Sigmoid colon (tissue), 7 donors: ENCODE measurements at regions of chr20 and their contacts with region 1.

Region 1: GRCh38 chr20:6767536-6768227 is at the start of gene BMP2:
- DNase-seq: peak; percentile 62
- H3K4me3 ChIP-seq: peak within 1 kb of the TSS; percentile 36 to 70 (median 64)
- H3K27ac ChIP-seq: peak within 1 kb of the TSS; percentile 29 to 68 (median 61)
- H3K4me1 ChIP-seq: peaks cover 0 to 24% (median 21%) of the 10 kb centered on the region in 4 donors
- H3K27me3 ChIP-seq: peaks cover 0 to 35% (median 13%) of the 10 kb centered on the region in 3 donors
- CTCF ChIP-seq: no peak
- EP300 ChIP-seq: no peak
- POLR2A ChIP-seq: no peak
- total RNA-seq, gene BMP2: 2.6 to 3.2 (median 2.8) TPM

Region 2: DNA sequence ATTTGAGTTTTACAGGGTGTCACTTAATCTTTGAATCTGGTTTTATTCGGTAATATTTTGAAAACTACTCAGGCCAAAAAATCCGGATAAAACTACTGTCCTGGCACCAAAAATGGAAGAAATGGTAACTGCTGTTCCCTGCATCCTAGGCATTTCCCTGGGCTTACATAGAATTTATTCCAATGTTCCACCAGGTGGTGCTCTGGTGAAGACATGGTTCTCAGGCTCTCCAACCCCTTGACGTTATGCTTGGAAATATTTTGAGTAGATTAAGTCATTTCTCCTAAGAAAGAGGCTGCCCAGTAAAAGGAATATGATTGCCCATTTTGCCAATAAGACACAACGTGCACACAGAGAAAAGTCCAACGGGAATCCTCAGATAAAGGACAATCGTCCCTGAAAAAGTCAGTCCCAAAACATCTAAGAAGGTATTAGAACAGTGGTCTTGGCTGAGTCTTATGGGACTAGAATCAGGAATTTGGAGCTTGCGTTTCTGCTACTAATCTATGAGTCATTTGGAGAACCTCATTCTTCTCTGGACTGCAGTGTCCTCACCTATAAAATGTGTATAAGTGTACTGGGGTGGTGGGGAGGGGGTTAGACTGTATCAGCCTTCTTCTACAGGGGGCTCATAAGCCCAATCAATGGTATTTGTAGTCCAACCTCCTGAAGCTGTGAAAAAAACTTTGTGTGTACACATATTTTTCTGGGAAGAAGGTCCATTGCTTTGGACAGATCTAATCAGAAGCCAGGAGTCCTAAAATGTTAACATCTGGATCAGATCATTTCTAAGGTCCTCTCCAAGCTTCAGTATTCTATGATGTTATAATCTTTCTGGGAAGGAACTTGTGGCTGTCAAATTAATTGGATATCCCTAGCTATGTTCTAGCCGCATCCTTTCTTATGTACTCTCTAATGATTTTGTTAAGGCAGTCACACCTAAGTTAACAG is 131.2 kb before region 1 on chr20:
- intact Hi-C with region 1: loop called (anchors 10 kb)
- DNase-seq: no peak
- H3K4me3 ChIP-seq: no peak overlapping the region
- H3K27ac ChIP-seq: peak overlapping the region in 1 of 4 donors; percentile 45
- H3K4me1 ChIP-seq: no peaks in the 10 kb centered on the region
- H3K27me3 ChIP-seq: no peaks in the 10 kb centered on the region
- CTCF ChIP-seq: peak in 3 of 4 experiments; percentile 19 to 22 (median 22)
- EP300 ChIP-seq: no peak
- POLR2A ChIP-seq: no peak

Region 3: DNA sequence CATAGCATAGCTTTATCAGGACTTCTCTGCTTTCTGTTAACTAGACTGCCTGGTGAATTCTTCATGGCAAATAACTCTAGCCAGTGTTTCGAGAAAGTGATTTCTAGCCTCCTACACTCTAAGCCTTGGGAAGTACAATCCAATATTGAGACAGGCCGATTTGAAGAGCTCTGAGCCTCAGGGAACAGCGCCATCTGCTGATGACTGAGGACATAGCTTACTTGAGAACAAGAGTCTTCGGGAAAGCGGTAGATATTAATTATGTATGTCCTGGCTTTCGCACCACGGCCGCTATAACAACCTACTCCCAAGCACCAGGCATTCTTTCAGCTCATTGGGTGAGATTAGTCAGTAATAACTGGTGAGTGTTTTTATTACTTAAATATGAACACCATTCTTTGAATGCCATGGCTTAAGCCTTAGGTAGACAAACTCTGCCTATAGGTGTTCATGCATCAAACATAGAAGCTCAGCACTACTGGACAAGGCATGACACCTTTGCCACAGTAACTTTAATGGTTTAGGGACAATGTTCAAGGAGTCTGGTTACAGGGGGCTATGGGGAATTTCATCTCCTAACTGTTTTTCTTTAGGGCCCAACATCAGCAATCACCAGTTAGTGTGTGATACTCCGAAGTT is 518.4 kb after region 1 on chr20:
- intact Hi-C with region 1: loop called (anchors 5 kb)
- DNase-seq: peak; percentile 82
- H3K4me3 ChIP-seq: no peak overlapping the region
- H3K27ac ChIP-seq: no peak overlapping the region
- H3K4me1 ChIP-seq: no peaks in the 10 kb centered on the region
- H3K27me3 ChIP-seq: no peaks in the 10 kb centered on the region
- CTCF ChIP-seq: peak; percentile 10 to 72 (median 58)
- EP300 ChIP-seq: no peak
- POLR2A ChIP-seq: no peak

Region 4: DNA sequence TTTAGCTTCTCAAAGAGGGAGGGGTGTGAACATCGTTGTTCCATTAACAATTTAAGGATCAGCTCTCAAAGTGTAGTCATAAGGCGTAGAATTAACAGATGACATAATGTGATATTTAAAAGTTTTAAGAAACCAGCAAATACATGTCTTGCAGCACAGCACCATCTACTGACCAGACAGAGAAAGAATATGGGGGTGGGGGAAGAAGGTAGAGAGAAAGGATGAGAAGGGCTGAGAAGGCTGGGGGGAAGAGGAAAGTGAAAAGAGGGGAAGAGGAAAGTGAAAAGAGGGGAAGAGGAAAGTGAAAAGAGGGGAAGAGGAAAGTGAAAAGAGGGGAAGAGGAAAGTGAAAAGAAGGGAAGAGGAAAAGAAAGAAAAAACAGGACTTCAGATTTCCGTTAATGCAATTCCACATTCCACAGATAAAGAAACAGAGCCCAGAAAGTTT is 1091.7 kb after region 1 on chr20:
- intact Hi-C with region 1: loop called (anchors 5 kb)
- DNase-seq: no peak
- H3K4me3 ChIP-seq: no peak overlapping the region
- H3K27ac ChIP-seq: no peak overlapping the region
- H3K4me1 ChIP-seq: peaks cover 0 to 4% (median 0%) of the 10 kb centered on the region in 4 donors
- H3K27me3 ChIP-seq: no peaks in the 10 kb centered on the region
- CTCF ChIP-seq: peak; percentile 53 to 61 (median 56)
- EP300 ChIP-seq: no peak
- POLR2A ChIP-seq: no peak

Region 5: DNA sequence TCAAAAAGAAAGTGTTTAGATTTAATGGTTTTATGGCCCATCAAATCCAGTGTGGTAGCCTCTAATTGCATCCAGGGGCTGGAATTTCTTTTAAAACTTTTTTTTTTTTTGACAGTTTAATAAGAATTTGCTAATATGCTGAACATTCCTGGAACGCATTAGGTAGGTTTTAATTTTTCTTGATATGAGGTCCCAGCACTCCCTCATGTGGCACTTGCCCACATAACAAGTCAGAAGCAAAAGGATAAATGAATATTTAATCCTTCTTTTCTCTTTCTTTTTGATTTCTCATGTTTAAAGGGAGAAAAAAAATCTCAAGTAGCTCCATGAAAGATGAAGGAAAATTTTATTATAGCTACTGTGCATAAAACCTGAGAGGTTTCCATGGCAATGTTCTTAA is 1159.1 kb after region 1 on chr20:
- intact Hi-C with region 1: loop called (anchors 10 kb)
- DNase-seq: no peak
- H3K4me3 ChIP-seq: no peak overlapping the region
- H3K27ac ChIP-seq: no peak overlapping the region
- H3K4me1 ChIP-seq: peaks cover 0 to 10% (median 8%) of the 10 kb centered on the region in 4 donors
- H3K27me3 ChIP-seq: no peaks in the 10 kb centered on the region
- CTCF ChIP-seq: peak in 1 of 4 experiments; percentile 31
- EP300 ChIP-seq: no peak
- POLR2A ChIP-seq: no peak